Activated CD4-positive, alpha-beta memory T cell treated with anti-CD3 and anti-CD28 coated beads for 36 hours (primary cell): ENCODE measurements at regions of chr14 and their contacts with region 1.

Region 1: DNA sequence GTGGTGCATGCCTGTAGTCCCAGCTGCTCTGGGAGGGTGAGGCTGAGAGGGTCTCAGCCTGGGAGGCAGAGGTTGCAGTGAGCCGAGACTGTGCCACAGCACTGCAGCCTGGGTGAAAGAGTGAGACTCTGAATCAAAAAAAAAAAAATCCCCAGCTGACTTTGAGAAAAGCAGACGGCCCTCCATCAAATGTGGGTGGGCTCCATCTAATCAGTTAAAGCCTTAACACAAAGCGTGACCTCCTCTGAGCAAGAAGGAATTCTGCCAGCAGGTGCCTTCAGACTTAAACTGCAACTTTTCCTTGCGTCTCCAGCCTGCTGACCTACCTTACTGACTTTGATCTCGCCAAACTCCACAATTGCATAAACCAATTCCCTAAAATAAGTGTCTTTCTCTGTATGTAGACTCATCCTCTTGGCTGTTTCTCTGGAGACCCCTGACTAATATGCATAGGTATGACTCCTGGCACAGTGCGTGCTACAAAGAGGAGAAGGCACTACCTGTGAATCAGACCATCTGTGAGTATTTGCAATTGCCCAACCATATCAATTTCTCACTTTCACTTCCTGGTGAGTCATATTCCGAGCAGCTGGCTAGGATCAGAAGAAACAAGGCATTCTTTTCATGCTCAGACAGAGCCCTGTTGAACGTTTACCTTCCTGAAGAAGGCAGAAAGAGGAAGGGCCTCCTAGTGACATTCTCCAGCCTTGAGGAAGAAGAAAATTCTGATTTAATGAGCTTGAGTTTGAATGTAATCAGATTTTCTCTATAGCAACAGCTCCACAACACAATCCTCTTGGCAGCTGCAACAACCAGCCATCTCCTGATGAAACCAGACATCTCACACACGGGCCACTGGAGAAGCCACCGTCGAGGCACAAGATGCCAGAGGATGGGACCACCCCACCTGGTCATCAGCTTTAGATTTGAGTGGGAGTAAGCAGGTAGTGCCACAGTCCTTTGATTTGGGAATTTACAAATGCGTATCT is 54.3 kb downstream of the CLMN start:
- DNase-seq: peak; percentile 72
- H3K4me3 Mint-ChIP-seq: no peak overlapping the region
- H3K27ac Mint-ChIP-seq: no peak overlapping the region
- H3K4me1 Mint-ChIP-seq: peaks cover 46% of the 10 kb centered on the region
- H3K27me3 Mint-ChIP-seq: peaks cover 1% of the 10 kb centered on the region

Region 2: GRCh38 chr14:94342334-94342934 is 923.0 kb before region 1 on chr14:
- CTCF ChIA-PET with region 1: no interaction called
- POLR2A ChIA-PET with region 1: no interaction called
- intact Hi-C with region 1: loop called (anchors 10 kb)
- DNase-seq: peak; percentile 80
- H3K4me3 Mint-ChIP-seq: no peak overlapping the region
- H3K27ac Mint-ChIP-seq: peak overlapping the region; percentile 80
- H3K4me1 Mint-ChIP-seq: peaks cover 78% of the 10 kb centered on the region
- H3K27me3 Mint-ChIP-seq: no peaks in the 10 kb centered on the region

Region 3: DNA sequence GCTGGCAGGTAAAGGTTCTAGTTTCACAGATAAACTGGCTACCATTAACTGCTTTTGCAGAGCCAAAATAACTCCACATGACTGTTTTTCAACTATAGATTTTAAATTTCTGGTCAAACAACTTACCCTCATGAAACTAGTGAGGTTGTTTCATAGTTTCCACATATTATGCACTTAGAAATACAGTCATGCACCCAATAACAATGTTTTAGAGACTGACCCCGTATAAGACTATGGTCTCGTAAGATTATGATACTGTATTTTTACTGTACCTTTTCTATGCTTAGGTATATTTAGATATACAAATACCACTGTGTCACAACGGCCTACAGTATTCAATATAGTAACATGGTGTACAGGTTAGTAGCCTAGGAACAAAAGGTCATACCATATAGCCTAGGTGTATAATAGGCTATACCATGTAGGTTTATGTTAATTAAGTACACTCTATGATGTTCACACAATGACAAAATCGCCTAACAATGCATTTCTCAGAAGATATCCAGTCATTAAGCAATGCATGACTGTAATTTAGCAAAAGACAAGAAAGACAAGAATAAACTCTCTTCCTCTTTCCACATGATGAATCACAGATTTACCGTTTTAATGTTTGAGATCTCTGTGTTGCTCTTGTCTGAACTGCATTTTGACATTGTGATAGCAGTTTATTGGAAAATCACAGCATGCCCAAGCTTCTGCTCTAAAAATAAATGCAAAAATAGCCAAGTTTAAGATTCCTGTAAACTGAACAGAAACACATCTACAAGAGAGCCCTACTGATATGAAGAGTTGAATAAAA is 125.1 kb before region 1 on chr14:
- CTCF ChIA-PET with region 1: no interaction called
- POLR2A ChIA-PET with region 1: no interaction called
- intact Hi-C with region 1: loop called (anchors 5 kb)
- DNase-seq: no peak
- H3K4me3 Mint-ChIP-seq: no peak overlapping the region
- H3K27ac Mint-ChIP-seq: peak overlapping the region; percentile 54
- H3K4me1 Mint-ChIP-seq: peaks cover 73% of the 10 kb centered on the region
- H3K27me3 Mint-ChIP-seq: no peaks in the 10 kb centered on the region

Region 4: DNA sequence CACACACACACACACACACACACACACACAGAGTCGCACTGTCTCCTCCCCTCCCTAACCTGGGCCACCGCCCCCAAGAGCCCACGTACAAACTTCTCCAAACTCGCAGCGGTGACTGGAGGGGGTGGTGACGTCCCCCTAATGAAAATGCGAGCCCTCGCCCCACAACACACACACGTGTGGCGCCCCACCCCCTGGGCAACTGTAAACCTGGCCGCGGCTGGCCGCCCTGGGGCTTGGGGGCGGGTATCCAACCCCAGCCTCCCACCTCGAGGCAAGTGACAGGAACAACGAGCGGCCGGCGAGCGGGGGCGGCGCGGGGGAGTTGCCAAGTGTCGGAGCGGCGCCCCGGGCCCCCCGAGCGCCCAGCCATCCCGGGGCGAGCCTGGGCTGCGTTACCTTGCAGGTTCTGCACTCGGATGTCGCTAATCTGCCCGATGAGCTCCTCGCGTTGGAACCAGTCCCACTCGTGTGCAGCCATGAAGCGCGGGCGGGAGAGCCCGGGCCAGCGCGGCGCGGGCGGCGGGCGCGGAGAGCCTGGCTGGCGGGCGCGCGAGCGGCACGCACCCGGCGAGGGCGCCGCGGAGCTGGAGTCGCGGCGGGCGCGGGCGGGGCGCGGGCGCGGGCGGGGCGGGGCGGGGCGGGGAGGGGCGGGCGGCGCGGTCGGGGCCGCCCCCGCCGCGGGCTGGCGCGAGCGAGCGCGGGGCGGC is 54.1 kb after region 1 on chr14 and contains the start of gene CLMN:
- CTCF ChIA-PET with region 1: no interaction called
- POLR2A ChIA-PET with region 1: interaction called, 6 read pairs
- intact Hi-C with region 1: loop called (anchors 1 kb)
- DNase-seq: peak; percentile 27
- H3K4me3 Mint-ChIP-seq: peak within 1 kb of the TSS; percentile 55
- H3K27ac Mint-ChIP-seq: no peak within 1 kb of the TSS
- H3K4me1 Mint-ChIP-seq: peaks cover 15% of the 10 kb centered on the region
- H3K27me3 Mint-ChIP-seq: peaks cover 23% of the 10 kb centered on the region
- total RNA-seq, gene CLMN: 0.92 to 0.97 TPM